Esophagus muscularis mucosa (tissue), 4 donors: ENCODE measurements at regions of chr7 and their contacts with region 1.

Region 1: DNA sequence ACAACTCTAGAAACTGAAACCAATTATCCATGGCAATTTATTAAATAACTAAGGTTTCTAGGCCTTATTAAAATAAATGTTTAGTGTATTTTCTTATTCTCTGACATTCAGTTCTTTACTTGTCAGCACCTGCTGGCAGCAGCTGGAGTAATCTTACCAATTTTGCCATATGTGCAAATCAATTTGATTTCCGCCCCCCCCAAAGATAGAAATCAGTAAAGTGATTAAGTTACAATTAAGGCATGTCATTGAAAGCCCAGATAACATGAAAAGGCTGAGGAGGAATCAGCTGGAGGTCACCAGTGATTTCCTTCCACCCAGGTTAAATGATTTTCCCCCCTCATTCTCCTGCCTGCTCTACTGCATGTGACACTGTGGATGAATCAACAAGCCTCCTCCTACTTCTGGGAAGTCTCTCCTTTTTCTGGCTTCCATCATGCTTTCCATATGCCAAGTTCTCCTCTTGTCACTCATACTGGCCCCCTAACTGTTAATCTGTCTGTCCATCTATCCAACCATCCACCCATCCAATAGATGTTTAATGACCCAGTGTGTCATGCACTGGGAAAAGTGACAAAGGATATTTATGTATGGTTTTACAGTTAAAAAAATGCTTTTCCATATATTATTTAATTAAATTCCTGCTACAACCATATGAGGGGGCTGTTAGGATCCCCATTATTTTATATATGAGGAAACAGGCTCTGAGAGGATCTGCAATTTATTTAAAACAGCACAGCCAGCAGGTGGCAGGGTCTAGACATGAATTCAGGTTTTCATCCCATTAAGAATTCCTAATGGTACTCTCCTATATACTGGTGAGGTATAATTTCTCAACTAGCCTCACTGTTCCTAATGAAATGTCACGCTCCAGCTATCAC is 116.5 kb downstream of the ATXN7L1 start:
- DNase-seq: no peak
- H3K4me3 ChIP-seq: no peak overlapping the region
- H3K27ac ChIP-seq: no peak overlapping the region
- H3K4me1 ChIP-seq: peaks cover 0 to 16% (median 9%) of the 10 kb centered on the region in 4 donors
- H3K27me3 ChIP-seq: no peaks in the 10 kb centered on the region
- CTCF ChIP-seq: peak; percentile 59 to 61 (median 60)
- EP300 ChIP-seq: no peak
- POLR2A ChIP-seq: no peak

Region 2: GRCh38 chr7:105866102-105866801 is 106.3 kb after region 1 on chr7:
- intact Hi-C with region 1: no loop called
- DNase-seq: no peak
- H3K4me3 ChIP-seq: no peak overlapping the region
- H3K27ac ChIP-seq: no peak overlapping the region
- H3K4me1 ChIP-seq: peaks cover 0 to 11% (median 0%) of the 10 kb centered on the region in 4 donors
- H3K27me3 ChIP-seq: no peaks in the 10 kb centered on the region
- CTCF ChIP-seq: no peak
- EP300 ChIP-seq: no peak
- POLR2A ChIP-seq: no peak

Region 3: DNA sequence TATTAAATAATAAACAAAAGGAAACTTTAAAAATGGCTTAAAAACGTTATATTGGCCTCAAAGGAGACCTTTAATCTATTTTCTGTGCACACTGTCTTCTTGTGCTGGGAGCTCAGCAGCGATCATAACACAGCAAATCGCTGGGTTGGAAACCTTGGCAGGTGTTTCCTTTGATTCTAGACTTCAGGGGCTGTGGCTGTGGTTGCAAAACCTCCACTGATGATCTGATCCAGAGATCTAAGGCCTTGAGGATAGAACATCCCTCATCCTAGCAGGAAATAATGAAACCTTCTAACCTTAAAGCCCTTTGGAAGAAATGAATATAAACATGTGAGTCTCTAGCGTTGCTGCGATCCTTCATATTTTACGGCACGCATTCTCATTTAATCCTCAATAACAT is 233.0 kb after region 1 on chr7:
- intact Hi-C with region 1: no loop called
- DNase-seq: no peak
- H3K4me3 ChIP-seq: no peak overlapping the region
- H3K27ac ChIP-seq: no peak overlapping the region
- H3K4me1 ChIP-seq: peaks cover 0 to 51% (median 41%) of the 10 kb centered on the region in 4 donors
- H3K27me3 ChIP-seq: no peaks in the 10 kb centered on the region
- CTCF ChIP-seq: no peak
- EP300 ChIP-seq: no peak
- POLR2A ChIP-seq: no peak

Region 4: GRCh38 chr7:106009403-106010226 is 249.7 kb after region 1 on chr7:
- intact Hi-C with region 1: loop called (anchors 10 kb)
- DNase-seq: peak; percentile 95
- H3K4me3 ChIP-seq: peak overlapping the region; percentile 12 to 46 (median 26)
- H3K27ac ChIP-seq: peak overlapping the region; percentile 69 to 84 (median 78)
- H3K4me1 ChIP-seq: peaks cover 7 to 50% (median 42%) of the 10 kb centered on the region in 4 donors
- H3K27me3 ChIP-seq: no peaks in the 10 kb centered on the region
- CTCF ChIP-seq: peak; percentile 95 to 99 (median 98)
- EP300 ChIP-seq: no peak
- POLR2A ChIP-seq: no peak

Region 5: GRCh38 chr7:106041140-106041717 is 281.3 kb after region 1 on chr7:
- intact Hi-C with region 1: loop called (anchors 1 kb)
- DNase-seq: no peak
- H3K4me3 ChIP-seq: no peak overlapping the region
- H3K27ac ChIP-seq: no peak overlapping the region
- H3K4me1 ChIP-seq: peaks cover 2 to 21% (median 16%) of the 10 kb centered on the region in 4 donors
- H3K27me3 ChIP-seq: no peaks in the 10 kb centered on the region
- CTCF ChIP-seq: peak; percentile 44 to 72 (median 49)
- EP300 ChIP-seq: no peak
- POLR2A ChIP-seq: no peak

Region 6: GRCh38 chr7:106153891-106154449 is 394.1 kb after region 1 on chr7:
- intact Hi-C with region 1: loop called (anchors 10 kb)
- DNase-seq: peak; percentile 91
- H3K4me3 ChIP-seq: peak overlapping the region in 2 of 4 donors; percentile 5 to 14
- H3K27ac ChIP-seq: no peak overlapping the region
- H3K4me1 ChIP-seq: peaks cover 8 to 15% (median 15%) of the 10 kb centered on the region in 4 donors
- H3K27me3 ChIP-seq: no peaks in the 10 kb centered on the region
- CTCF ChIP-seq: peak; percentile 94 to 97 (median 97)
- EP300 ChIP-seq: no peak
- POLR2A ChIP-seq: no peak